Aorta (tissue), 5 donors: ENCODE measurements at regions of chrX and their contacts with region 1.

Region 1: DNA sequence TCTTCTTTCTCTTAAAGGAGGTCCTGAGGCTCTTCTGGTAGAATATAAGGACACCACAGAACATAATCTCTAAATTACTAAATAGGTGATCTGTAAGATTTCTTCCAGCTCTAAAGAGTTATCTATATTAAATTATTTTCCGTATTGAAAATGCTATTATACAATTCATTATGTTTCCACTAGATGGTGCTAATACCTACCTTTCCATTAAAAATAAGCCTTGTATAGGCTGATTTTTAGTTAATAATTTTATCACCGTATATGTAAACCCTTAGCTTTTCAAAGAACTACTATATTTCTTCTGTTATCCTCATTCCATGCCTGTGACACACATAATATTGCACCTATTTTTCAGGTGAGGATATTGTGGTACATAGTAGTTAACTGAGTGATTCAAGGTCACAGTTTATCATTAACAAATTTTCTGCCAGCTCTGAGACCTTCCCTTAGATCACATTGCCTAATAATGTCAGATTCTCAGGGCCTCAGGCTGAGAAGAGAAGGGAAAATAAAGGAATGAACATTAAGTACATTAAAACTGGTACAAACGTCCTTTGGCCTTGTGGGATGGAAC is 138.8 kb downstream of the TEX11 start:
- DNase-seq: no peak
- ATAC-seq: no peak
- H3K4me3 ChIP-seq: no peak overlapping the region
- H3K27ac ChIP-seq: no peak overlapping the region
- H3K4me1 ChIP-seq: no peaks in the 10 kb centered on the region
- H3K27me3 ChIP-seq: no peaks in the 10 kb centered on the region

Region 2: GRCh38 chrX:71162981-71163380 is 393.2 kb after region 1 on chrX:
- intact Hi-C with region 1: loop called in 1 of 2 experiments (anchors 5 kb)
- DNase-seq: peak in 1 of 2 donors; percentile 8
- ATAC-seq: no peak
- H3K4me3 ChIP-seq: no peak overlapping the region
- H3K27ac ChIP-seq: no peak overlapping the region
- H3K4me1 ChIP-seq: no peaks in the 10 kb centered on the region
- H3K27me3 ChIP-seq: no peaks in the 10 kb centered on the region